ENCODE measurements at regions of chr1 and their contacts with region 1.

Region 1: DNA sequence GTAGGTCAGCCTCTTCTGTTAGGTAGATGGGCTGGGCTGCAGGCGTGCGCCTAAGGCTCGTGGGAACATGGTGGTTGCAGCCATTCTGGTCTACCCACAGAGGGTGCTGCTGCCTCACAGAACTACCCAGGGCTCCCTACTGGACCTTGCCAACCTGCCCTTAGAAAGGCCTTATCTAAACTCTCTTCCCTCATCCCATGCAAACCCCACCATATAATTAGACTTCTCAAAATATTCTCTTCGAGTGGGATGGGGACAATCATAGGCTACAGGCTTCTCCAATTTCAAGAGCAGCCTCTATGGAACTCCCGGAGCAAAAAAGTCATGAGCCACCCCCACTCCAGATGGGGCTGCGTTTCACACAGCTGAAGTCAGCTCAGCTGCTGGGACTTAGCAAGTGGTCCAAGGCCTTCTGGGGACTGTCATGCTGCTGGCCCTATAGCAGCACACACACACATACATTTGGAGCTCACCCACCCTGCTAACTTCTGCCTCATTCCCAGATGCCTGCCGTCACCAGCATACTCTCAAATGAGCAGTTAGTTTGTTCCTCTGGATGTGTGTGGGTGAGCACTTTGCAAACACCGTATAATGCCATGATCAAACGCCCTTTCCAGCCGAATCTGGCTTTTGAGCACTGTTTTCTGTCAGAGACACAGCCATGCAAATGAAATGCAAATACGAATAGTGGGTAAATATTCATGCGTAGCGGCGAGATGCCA is 6.1 kb upstream of the SDHB start:
- DNase-seq: peak; percentile 43 to 75 (median 72)
- ATAC-seq: peak; percentile 76 to 83
- H3K4me3 ChIP-seq: no peak overlapping the region
- H3K27ac ChIP-seq: no peak overlapping the region
- H3K4me1 ChIP-seq: no peaks in the 10 kb centered on the region
- H3K27me3 ChIP-seq: no peaks in the 10 kb centered on the region

Region 2: GRCh38 chr1:17236779-17237560 is 177.1 kb after region 1 on chr1:
- intact Hi-C with region 1: loop called in 3 of 4 experiments (anchors 5 kb)
- DNase-seq: peak; percentile 82 to 94 (median 90)
- ATAC-seq: peak; percentile 67 to 85
- H3K4me3 ChIP-seq: no peak overlapping the region
- H3K27ac ChIP-seq: no peak overlapping the region
- H3K4me1 ChIP-seq: no peaks in the 10 kb centered on the region
- H3K27me3 ChIP-seq: no peaks in the 10 kb centered on the region

Region 3: GRCh38 chr1:17287130-17287776 is 227.4 kb after region 1 on chr1:
- intact Hi-C with region 1: no loop called
- DNase-seq: no peak
- ATAC-seq: no peak
- H3K4me3 ChIP-seq: no peak overlapping the region
- H3K27ac ChIP-seq: no peak overlapping the region
- H3K4me1 ChIP-seq: no peaks in the 10 kb centered on the region
- H3K27me3 ChIP-seq: no peaks in the 10 kb centered on the region

Measured in right cardiac atrium (tissue), 5 donors.